Thyroid gland (tissue), 4 donors: ENCODE measurements at regions of chr7 and their contacts with region 1.

Region 1: DNA sequence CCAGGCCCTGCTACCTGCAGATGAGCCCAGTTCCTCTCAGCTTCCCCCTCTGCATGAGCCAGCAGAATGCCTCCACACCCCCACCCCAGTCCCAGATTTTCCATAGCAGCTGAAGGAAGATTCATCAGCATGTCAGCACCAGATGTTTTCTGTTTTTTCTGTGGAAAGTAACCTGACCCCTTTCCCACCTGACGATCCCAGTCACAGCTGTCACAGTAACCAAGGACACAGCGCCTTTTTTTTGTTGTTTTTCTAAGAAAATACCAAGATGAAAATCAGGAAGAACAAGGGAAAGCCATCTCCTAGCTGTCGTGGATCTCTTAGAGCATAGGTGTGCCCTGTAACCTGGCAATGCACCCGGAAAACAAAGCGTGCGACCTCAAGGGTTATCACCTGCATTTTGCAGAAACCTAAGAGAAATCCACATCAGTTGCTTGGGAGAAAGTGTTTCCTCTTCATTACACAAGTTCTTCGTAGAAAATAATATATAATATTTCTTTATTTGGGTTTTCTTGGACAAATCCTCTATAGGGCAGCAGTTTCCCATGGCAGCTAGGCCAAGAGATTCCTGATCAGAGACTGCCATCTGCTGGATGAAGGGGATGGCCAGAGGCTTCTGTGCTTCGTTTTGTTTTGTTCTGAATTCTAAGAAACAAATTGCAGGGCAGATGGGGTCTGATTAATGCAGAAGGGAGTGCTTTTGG is 401.9 kb downstream of the TNS3 start:
- DNase-seq: peak; percentile 41 to 56
- H3K4me3 ChIP-seq: no peak overlapping the region
- H3K27ac ChIP-seq: no peak overlapping the region
- H3K4me1 ChIP-seq: peaks cover 16 to 31% of the 10 kb centered on the region in 2 donors
- H3K27me3 ChIP-seq: no peaks in the 10 kb centered on the region
- CTCF ChIP-seq: peak; percentile 28 to 81 (median 70)
- POLR2A ChIP-seq: no peak

Region 2: DNA sequence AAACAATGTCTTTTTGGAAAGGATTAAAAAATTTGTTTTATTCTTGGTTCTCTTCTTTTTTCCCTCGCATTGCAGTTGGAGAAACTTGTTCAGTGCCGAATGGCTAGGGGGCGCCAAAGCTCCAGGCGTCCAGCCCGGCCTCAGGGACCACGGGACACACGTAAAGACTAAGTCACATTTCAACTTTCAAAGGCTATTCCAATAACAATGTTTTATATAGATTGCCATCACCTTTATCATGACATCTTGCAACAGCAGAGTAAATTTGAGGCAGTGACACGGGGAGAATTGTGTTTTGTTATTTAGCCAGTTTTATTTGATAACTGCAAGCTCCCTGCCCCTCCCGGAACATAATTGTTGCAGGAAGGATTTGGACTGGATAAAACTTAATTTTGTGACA is 1256.7 kb before region 1 on chr7:
- intact Hi-C with region 1: loop called (anchors 5 kb)
- DNase-seq: peak; percentile 71 to 83
- H3K4me3 ChIP-seq: no peak overlapping the region
- H3K27ac ChIP-seq: no peak overlapping the region
- H3K4me1 ChIP-seq: peaks cover 14 to 35% of the 10 kb centered on the region in 2 donors
- H3K27me3 ChIP-seq: no peaks in the 10 kb centered on the region
- CTCF ChIP-seq: peak; percentile 68 to 92 (median 77)
- POLR2A ChIP-seq: no peak

Region 3: DNA sequence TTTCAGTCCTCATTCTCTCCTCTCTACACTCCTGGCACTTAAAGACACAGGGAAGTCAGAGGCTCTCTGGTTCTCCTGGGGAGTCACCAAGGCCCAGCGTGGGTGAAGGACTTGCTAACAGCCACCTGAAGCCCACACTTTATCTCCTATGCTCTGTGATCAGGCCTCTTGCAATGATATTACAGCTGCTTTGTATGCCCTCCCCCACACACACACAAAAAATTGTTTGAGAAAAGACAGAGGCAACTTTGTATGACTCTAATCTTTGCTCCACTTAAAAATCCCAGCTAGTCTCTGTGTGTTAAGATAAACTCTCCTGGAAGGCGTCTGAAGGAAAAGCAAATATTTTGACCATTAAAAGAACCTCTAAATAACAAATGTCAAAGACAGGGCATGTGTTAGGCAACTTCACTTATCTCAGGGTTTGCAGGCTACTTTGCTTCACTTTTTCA is 105.2 kb before region 1 on chr7:
- intact Hi-C with region 1: no loop called
- DNase-seq: no peak
- H3K4me3 ChIP-seq: no peak overlapping the region
- H3K27ac ChIP-seq: peak overlapping the region in 1 of 3 donors; percentile 18
- H3K4me1 ChIP-seq: peaks cover 7 to 11% of the 10 kb centered on the region in 2 donors
- H3K27me3 ChIP-seq: no peaks in the 10 kb centered on the region
- CTCF ChIP-seq: no peak
- POLR2A ChIP-seq: no peak

Region 4: DNA sequence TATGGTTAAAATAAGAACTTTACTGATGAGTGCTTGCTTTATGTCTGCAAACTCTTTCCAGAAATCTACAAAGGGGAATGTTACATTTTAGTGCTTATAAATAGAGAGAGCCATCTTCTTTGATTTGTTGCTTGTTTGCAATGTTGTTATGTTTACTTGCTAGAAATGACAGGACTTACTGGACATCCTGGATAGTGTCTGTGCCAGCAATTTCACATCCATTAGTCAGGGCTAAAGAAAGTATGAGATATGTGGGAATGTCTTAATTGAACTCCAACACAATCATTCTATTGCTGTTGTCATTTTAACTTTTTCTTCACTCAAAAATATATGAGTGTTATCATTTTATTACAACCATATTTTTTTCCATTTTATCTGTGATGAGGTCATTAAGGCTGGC is 51.3 kb before region 1 on chr7:
- intact Hi-C with region 1: no loop called
- DNase-seq: no peak
- H3K4me3 ChIP-seq: no peak overlapping the region
- H3K27ac ChIP-seq: no peak overlapping the region
- H3K4me1 ChIP-seq: no peaks in the 10 kb centered on the region
- H3K27me3 ChIP-seq: no peaks in the 10 kb centered on the region
- CTCF ChIP-seq: no peak
- POLR2A ChIP-seq: no peak